ENCODE measurements at regions of chr10 and their contacts with region 1.

Region 1: GRCh38 chr10:43689955-43690771 is 41.5 kb upstream of the ZNF32 start:
- DNase-seq: peak; percentile 74 to 84 (median 80)
- H3K4me3 ChIP-seq: peak overlapping the region in 3 of 4 donors; percentile 13 to 47 (median 35)
- H3K27ac ChIP-seq: peak overlapping the region in 2 of 5 donors; percentile 21 to 47
- H3K4me1 ChIP-seq: peaks cover 3 to 12% of the 10 kb centered on the region in 2 donors
- H3K27me3 ChIP-seq: no peaks in the 10 kb centered on the region
- CTCF ChIP-seq: peak; percentile 60 to 93 (median 80)
- POLR2A ChIP-seq: no peak

Region 2: GRCh38 chr10:43905512-43906236 is 215.5 kb after region 1 on chr10:
- intact Hi-C with region 1: loop called in 1 of 2 experiments (anchors 10 kb)
- DNase-seq: no peak
- H3K4me3 ChIP-seq: no peak overlapping the region
- H3K27ac ChIP-seq: peak overlapping the region in 2 of 5 donors; percentile 30 to 57
- H3K4me1 ChIP-seq: peaks cover 0 to 3% of the 10 kb centered on the region in 2 donors
- H3K27me3 ChIP-seq: no peaks in the 10 kb centered on the region
- CTCF ChIP-seq: no peak
- POLR2A ChIP-seq: no peak

Region 3: GRCh38 chr10:44310762-44311562 is 620.8 kb after region 1 on chr10:
- intact Hi-C with region 1: loop called in 1 of 2 experiments (anchors 5 kb)
- DNase-seq: peak; percentile 79 to 89 (median 85)
- H3K4me3 ChIP-seq: peak overlapping the region in 1 of 4 donors; percentile 27
- H3K27ac ChIP-seq: no peak overlapping the region
- H3K4me1 ChIP-seq: no peaks in the 10 kb centered on the region
- H3K27me3 ChIP-seq: peaks cover 4% of the 10 kb centered on the region
- CTCF ChIP-seq: peak; percentile 56 to 98 (median 82)
- POLR2A ChIP-seq: no peak

Region 4: DNA sequence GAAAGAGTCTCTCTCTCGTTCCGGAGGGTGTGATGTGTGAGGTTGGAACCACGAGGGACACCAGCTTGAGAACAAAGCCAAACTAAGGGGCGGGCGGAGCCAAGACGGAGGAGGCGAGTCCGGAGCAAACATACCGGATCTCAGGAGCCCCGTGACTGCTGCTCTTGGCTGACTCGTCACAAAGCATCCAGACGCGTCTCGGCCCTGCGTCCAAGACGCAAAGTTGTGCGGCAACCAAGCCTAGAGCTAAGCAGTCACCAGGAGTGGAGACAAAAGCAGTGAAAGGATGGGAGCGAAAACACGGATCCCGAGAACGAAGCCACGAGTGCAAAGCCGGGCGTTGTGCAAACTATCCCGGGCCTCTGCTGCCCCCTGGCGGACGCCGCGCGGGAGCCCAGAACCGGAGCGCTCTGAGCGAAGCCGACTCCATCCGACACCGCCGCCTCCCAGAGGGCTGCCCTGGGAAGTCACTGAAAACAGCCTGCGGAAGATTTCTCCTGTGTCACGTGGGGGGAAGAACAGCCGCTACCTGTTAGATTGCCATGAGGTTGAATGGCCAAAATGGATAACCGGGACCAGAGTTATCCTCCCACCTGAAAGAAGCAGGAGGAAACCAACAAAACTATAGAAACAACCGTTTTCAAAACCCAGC is 1174.6 kb after region 1 on chr10:
- intact Hi-C with region 1: loop called in 1 of 2 experiments (anchors 10 kb)
- DNase-seq: peak; percentile 84 to 95 (median 91)
- H3K4me3 ChIP-seq: peak overlapping the region in 2 of 4 donors; percentile 24 to 50
- H3K27ac ChIP-seq: peak overlapping the region in 2 of 5 donors; percentile 41 to 56
- H3K4me1 ChIP-seq: peaks cover 0 to 9% of the 10 kb centered on the region in 2 donors
- H3K27me3 ChIP-seq: peaks cover 19% of the 10 kb centered on the region
- CTCF ChIP-seq: peak; percentile 91 to 99 (median 96)
- POLR2A ChIP-seq: no peak

Measured in adrenal gland (tissue), 19 donors.